Breast epithelium (tissue), 4 donors: ENCODE measurements at regions of chr1 and their contacts with region 1.

Region 1: DNA sequence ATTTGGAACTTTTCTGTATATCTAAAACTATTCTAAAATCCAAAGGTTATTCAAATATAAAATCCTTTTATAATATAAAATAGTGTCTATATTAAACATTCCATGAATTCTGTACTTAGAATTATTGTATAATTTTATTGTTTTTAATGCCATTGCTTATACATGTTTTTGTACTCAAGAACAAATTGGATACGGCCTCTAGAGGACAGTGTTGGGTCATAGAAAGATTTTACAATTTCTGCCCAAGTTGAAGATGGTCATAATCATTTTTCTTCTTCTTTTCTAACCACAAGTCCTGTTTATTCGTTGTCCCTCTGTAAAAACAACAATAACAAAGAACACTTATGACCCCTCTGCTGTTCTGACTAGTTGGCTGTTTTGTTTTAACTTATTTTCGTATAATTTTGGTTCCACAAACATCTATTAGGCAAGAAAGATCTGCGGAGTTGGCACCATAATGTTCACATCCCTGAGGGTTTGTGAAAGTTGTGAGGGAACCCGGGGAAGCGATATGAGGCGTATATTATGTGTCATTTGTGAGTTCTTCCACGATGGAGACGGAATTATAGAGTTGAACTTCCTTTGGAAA is 75.7 kb upstream of the KIF26B start:
- DNase-seq: no peak
- H3K4me3 ChIP-seq: no peak overlapping the region
- H3K27ac ChIP-seq: no peak overlapping the region
- H3K4me1 ChIP-seq: no peaks in the 10 kb centered on the region
- H3K27me3 ChIP-seq: no peaks in the 10 kb centered on the region
- CTCF ChIP-seq: peak in 1 of 3 donors; percentile 39
- POLR2A ChIP-seq: no peak

Region 2: DNA sequence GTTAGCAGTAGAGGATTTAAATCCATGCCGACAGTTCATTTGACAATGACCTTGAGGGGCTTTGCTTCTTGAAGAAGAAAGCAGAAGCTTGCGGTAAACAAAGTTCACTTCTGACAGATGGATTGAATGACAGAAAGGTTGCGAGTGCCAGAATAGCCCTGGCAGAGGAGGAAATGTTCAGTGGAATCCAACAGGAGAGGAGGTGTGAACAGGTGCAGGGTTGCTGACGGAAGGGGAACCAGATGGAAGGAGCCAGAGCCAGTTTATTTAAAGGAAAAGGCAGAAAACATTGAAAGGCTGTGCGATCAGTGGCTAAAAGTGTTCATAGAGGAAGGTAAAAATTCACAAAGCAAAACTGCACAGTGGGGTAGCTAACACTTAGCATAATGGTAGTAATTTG is 1682.2 kb before region 1 on chr1:
- intact Hi-C with region 1: loop called (anchors 5 kb)
- DNase-seq: no peak
- H3K4me3 ChIP-seq: no peak overlapping the region
- H3K27ac ChIP-seq: no peak overlapping the region
- H3K4me1 ChIP-seq: no peaks in the 10 kb centered on the region
- H3K27me3 ChIP-seq: no peaks in the 10 kb centered on the region
- CTCF ChIP-seq: no peak
- POLR2A ChIP-seq: no peak

Region 3: DNA sequence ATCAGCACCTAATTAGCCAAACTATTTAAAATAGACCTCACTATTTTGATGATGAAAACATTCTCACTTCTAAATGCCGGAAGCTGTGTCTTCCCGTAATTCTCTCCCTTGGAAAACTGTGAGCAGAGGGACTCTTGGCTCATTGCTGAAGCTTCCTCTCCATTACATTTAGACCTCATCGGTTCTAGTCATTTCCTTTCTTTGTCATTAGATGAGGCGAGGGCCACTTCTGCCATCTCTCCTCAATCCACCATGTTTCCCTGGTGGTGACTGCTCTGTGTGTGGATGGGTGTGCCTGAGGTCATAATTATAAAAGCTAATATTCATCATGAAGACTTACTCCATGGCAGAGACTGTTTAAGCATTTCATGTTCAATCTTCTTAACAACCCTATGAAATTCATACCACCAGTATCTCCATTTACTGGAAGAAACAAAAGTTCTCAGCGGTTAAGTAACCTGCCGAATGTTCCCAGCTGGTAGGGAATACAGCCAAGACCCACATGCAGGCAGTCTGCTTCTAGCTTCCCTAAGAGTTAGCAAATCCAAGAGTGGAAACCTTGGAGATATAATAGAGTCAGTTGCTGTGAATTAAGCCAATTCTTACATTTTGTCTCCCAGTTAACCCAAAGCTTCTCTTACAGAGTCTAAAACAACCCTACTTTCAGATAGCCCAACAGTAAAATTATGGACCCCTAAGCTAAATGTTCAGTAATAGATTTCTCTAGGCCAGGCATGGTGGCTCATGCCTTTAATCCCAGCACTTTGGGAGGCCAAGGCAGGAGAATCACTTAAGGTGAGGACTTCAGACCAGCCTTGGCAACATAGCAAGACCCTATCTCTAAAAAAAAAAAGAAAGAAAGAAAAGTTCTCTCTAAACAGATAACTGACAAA is 871.8 kb before region 1 on chr1:
- intact Hi-C with region 1: no loop called
- DNase-seq: no peak
- H3K4me3 ChIP-seq: no peak overlapping the region
- H3K27ac ChIP-seq: no peak overlapping the region
- H3K4me1 ChIP-seq: no peaks in the 10 kb centered on the region
- H3K27me3 ChIP-seq: no peaks in the 10 kb centered on the region
- CTCF ChIP-seq: no peak
- POLR2A ChIP-seq: no peak

Region 4: DNA sequence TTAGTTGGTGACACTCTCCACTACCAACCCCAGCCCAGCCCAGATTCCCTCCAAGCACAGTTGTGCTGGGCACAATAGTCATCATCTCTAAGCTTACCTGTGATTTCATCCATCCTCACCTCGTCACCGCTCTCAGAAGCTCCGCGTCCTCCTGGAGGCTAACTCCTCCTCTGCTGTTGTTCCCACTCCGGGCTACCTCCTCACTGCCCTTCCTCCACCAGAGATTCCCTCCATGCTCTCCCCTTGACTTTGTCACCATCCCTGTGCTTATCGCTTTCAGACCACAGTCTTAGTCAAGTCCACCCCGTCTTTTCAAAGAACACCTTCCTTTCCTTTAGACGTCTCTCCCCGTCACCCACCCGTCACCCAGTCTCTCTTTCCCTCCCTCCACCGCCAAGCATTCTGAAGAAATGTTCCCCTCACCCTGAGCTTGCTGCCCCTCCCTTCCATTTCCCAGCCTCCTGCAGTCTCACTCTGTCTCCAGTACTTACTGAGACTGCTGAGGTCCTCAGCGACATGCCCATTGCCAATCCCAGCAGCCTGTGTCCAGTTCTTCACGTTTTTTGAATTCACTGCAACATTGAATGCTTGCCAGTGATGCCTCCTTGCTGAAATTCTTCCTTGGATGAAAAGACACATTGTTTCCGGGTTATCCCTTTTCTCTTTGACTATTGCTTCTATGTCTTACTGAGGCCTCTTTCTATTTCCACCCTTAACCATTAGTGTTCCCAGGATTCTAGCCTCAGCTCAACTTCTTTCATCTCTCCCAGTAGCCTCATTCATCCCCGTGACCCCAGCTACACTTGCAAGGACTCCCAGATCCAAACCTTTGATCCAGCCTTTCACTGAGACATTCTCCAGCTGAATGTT is 28.9 kb after region 1 on chr1:
- intact Hi-C with region 1: no loop called
- DNase-seq: no peak
- H3K4me3 ChIP-seq: no peak overlapping the region
- H3K27ac ChIP-seq: no peak overlapping the region
- H3K4me1 ChIP-seq: no peaks in the 10 kb centered on the region
- H3K27me3 ChIP-seq: no peaks in the 10 kb centered on the region
- CTCF ChIP-seq: no peak
- POLR2A ChIP-seq: no peak